ENCODE measurements at regions of chr18 and their contacts with region 1.

Region 1: DNA sequence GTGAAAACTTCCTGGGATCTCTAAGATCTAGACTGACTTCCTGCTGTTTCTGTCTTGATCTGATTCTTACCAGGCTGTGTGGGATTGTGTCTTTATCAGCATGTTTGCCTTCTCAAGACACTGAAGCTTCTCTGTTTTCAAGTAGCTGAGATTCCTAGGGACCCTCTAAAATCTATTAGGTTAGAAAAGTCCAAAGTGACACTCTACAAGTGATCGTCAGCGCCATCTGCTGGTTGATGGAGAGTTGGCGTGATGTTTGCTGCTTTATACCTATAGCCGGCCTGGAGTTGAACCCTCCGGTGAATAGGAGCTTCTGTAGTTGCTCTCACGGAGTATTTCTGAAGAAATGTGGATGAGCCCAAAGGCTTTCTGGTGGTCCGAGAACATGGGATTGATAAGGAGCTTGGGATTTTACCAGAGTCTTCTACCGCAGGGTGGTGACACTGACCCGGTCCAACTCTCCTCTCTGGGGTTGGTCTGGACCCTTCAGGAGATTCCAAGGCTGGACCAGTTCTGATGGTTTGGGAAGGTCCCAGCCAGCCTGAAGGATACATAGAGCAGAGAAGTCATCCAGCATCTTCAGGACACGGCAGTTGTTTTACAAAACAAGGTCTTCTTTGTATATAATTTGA is 96.0 kb upstream of the TTC39C start:
- DNase-seq: no peak
- H3K4me3 ChIP-seq: no peak overlapping the region
- H3K27ac ChIP-seq: no peak overlapping the region
- H3K4me1 ChIP-seq: peaks cover 0 to 5% (median 4%) of the 10 kb centered on the region in 4 donors
- H3K27me3 ChIP-seq: no peaks in the 10 kb centered on the region
- CTCF ChIP-seq: peak; percentile 78 to 92 (median 82)
- EP300 ChIP-seq: no peak
- POLR2A ChIP-seq: no peak

Region 2: GRCh38 chr18:23629444-23629946 is 289.0 kb before region 1 on chr18:
- intact Hi-C with region 1: loop called (anchors 10 kb)
- DNase-seq: no peak
- H3K4me3 ChIP-seq: no peak overlapping the region
- H3K27ac ChIP-seq: no peak overlapping the region
- H3K4me1 ChIP-seq: peaks cover 0 to 5% (median 0%) of the 10 kb centered on the region in 4 donors
- H3K27me3 ChIP-seq: no peaks in the 10 kb centered on the region
- CTCF ChIP-seq: no peak
- EP300 ChIP-seq: no peak
- POLR2A ChIP-seq: no peak

Region 3: GRCh38 chr18:23828426-23828825 is 90.1 kb before region 1 on chr18:
- intact Hi-C with region 1: loop called (anchors 5 kb)
- DNase-seq: peak; percentile 17
- H3K4me3 ChIP-seq: no peak overlapping the region
- H3K27ac ChIP-seq: no peak overlapping the region
- H3K4me1 ChIP-seq: peaks cover 19 to 34% (median 29%) of the 10 kb centered on the region in 4 donors
- H3K27me3 ChIP-seq: no peaks in the 10 kb centered on the region
- CTCF ChIP-seq: no peak
- EP300 ChIP-seq: no peak
- POLR2A ChIP-seq: no peak

Measured in esophagus muscularis mucosa (tissue), 4 donors.